Breast epithelium (tissue), 4 donors: ENCODE measurements at regions of chr7 and their contacts with region 1.

Region 1: GRCh38 chr7:126254297-126254696 is 998.4 kb downstream of the GRM8 start:
- DNase-seq: no peak
- H3K4me3 ChIP-seq: no peak overlapping the region
- H3K27ac ChIP-seq: no peak overlapping the region
- H3K4me1 ChIP-seq: no peaks in the 10 kb centered on the region
- H3K27me3 ChIP-seq: no peaks in the 10 kb centered on the region
- CTCF ChIP-seq: no peak
- POLR2A ChIP-seq: no peak

Region 2: DNA sequence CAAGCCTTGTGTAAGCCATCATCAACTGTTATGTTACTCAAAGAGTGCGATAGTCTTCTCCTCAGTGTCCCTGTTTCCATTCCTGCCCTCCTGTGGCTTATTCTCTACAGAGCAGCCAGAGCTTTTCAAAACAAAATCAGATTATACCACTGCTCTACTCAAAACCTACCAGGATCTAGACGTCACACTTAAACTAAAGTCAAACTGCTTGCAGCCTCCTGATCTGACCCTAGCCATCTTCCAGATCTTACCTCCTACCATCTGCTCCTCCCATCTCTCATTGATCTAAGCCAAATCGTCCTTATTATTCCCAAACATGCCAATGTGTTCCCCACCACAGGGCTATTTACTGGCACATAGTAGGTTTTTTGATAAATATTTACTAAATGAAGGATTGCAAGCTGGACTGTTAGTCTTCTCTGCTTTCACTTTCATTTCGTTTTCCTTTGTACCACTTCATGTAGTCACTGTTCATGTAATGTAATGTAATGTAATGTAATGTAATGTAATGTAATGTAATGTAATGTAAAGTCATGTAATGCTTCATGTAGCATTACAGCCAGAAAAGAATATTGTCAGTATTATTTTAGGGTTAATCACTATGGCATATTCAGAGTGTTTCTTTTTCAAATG is 1604.8 kb before region 1 on chr7:
- intact Hi-C with region 1: no loop called
- DNase-seq: no peak
- H3K4me3 ChIP-seq: peak overlapping the region in 1 of 3 donors; percentile 36
- H3K27ac ChIP-seq: no peak overlapping the region
- H3K4me1 ChIP-seq: no peaks in the 10 kb centered on the region
- H3K27me3 ChIP-seq: no peaks in the 10 kb centered on the region
- CTCF ChIP-seq: no peak
- POLR2A ChIP-seq: no peak

Region 3: DNA sequence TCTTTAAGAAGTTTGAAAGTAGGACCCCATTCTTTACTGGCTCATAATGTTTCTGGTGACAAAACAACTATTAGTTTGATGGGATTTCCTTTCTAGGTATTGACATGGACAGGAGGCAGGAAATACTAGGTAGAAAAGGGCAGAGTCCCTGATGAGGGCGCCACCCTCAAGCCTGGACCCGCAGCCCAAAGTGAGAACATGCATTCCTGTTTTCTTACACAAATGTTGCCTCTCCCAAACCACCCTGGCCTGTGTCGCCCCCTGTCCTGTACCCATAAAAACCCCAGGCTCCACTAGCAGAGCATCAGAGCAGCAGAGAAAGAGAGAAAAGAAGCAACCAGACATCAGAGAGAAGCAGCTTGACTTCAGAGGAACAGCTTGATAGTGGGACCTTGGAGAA is 269.5 kb before region 1 on chr7:
- intact Hi-C with region 1: loop called (anchors 5 kb)
- DNase-seq: no peak
- H3K4me3 ChIP-seq: no peak overlapping the region
- H3K27ac ChIP-seq: no peak overlapping the region
- H3K4me1 ChIP-seq: no peaks in the 10 kb centered on the region
- H3K27me3 ChIP-seq: no peaks in the 10 kb centered on the region
- CTCF ChIP-seq: no peak
- POLR2A ChIP-seq: no peak